Right lobe of liver (tissue), 6 donors: ENCODE measurements at regions of chr19 and their contacts with region 1.

Region 1: DNA sequence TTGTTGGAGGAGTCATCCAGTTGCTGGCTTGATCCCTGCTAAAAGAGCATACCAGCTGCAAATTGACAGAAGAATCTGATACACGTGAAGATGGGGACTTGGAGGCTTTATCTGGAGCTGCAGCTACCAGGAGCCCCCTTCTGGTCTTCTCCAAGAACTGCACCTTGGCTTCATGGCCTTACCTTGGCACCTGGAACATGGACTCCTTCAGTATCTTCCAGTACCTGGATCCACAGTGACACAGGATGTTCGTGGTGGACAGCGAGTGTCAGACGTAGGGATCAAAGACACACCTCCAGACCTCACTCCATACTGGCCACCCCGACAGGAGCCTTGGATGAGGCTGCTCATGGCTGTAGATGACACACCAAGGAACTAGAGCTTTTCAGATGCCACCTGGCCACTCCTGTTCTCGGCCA is 9.9 kb upstream of the ACSBG2 start:
- DNase-seq: peak; percentile 39 to 71 (median 62)
- ATAC-seq: peak; percentile 97 to 98 (median 98)
- H3K4me3 ChIP-seq: no peak overlapping the region
- H3K27ac ChIP-seq: no peak overlapping the region
- H3K4me1 ChIP-seq: no peaks in the 10 kb centered on the region
- H3K27me3 ChIP-seq: no peaks in the 10 kb centered on the region
- CTCF ChIP-seq: peak; percentile 95 to 98 (median 97)
- POLR2A ChIP-seq: no peak

Region 2: GRCh38 chr19:6048808-6049405 is 76.7 kb before region 1 on chr19:
- intact Hi-C with region 1: loop called (anchors 5 kb)
- DNase-seq: peak; percentile 73 to 78 (median 74)
- ATAC-seq: peak; percentile 97 to 99 (median 98)
- H3K4me3 ChIP-seq: no peak overlapping the region
- H3K27ac ChIP-seq: no peak overlapping the region
- H3K4me1 ChIP-seq: peaks cover 0 to 7% (median 3%) of the 10 kb centered on the region in 4 donors
- H3K27me3 ChIP-seq: no peaks in the 10 kb centered on the region
- CTCF ChIP-seq: peak; percentile 85 to 87 (median 86)
- POLR2A ChIP-seq: no peak